ENCODE measurements at regions of chr12 and their contacts with region 1.

Region 1: GRCh38 chr12:546921-547845 is 87.4 kb downstream of the B4GALNT3 start:
- DNase-seq: peak; percentile 74 to 78
- ATAC-seq: peak; percentile 77 to 91
- H3K4me3 ChIP-seq: peak overlapping the region; percentile 9; the same call in 1 of the 3 replicates
- H3K27ac ChIP-seq: peak overlapping the region in 1 of 2 experiments; percentile 44; a peak in 1 of 6 replicates
- H3K4me1 ChIP-seq: peaks cover 13% of the 10 kb centered on the region; the same call in 2 of the 3 replicates
- CTCF ChIP-seq: peak; percentile 94
- EP300 ChIP-seq: no peak
- POLR2A ChIP-seq: no peak
- RAD21 ChIP-seq: peak; percentile 97 to 99

Region 2: GRCh38 chr12:401235-402028 is 145.8 kb before region 1 on chr12 and contains the start of gene CCDC77:
- CTCF ChIA-PET with region 1: interaction called, 14 read pairs
- POLR2A ChIA-PET with region 1: no interaction called
- DNase-seq: peak; percentile 78 to 95
- ATAC-seq: peak; percentile 97 to 99
- H3K4me3 ChIP-seq: peak within 1 kb of the TSS; percentile 72
- H3K27ac ChIP-seq: peak within 1 kb of the TSS; percentile 60 to 78
- H3K4me1 ChIP-seq: peaks cover 17% of the 10 kb centered on the region
- CTCF ChIP-seq: no peak; the same call in 1 of the 3 replicates
- EP300 ChIP-seq: no peak
- POLR2A ChIP-seq: no peak
- RAD21 ChIP-seq: no peak
- polyA plus RNA-seq, gene CCDC77: 15.6 and 23.1 TPM in 2 replicates

Region 3: GRCh38 chr12:452667-453210 is 94.4 kb before region 1 on chr12:
- CTCF ChIA-PET with region 1: interaction called, 252 read pairs
- POLR2A ChIA-PET with region 1: no interaction called
- DNase-seq: no peak
- ATAC-seq: 0 out of 6 replicates have a peak, but pooled peaks of 1 of the 2 experiments have one; percentile 33
- H3K4me3 ChIP-seq: no peak overlapping the region
- H3K27ac ChIP-seq: no peak overlapping the region
- H3K4me1 ChIP-seq: no peaks in the 10 kb centered on the region
- CTCF ChIP-seq: no peak
- EP300 ChIP-seq: no peak
- POLR2A ChIP-seq: no peak
- RAD21 ChIP-seq: no peak; a peak in 2 of 5 replicates

Region 4: GRCh38 chr12:480831-481816 is 66.1 kb before region 1 on chr12:
- CTCF ChIA-PET with region 1: interaction called, 46 read pairs
- POLR2A ChIA-PET with region 1: no interaction called
- DNase-seq: no peak
- ATAC-seq: no peak; a peak in 2 of 6 replicates
- H3K4me3 ChIP-seq: no peak overlapping the region
- H3K27ac ChIP-seq: no peak overlapping the region
- H3K4me1 ChIP-seq: no peaks in the 10 kb centered on the region
- CTCF ChIP-seq: no peak
- EP300 ChIP-seq: no peak
- POLR2A ChIP-seq: no peak
- RAD21 ChIP-seq: no peak

Region 5: DNA sequence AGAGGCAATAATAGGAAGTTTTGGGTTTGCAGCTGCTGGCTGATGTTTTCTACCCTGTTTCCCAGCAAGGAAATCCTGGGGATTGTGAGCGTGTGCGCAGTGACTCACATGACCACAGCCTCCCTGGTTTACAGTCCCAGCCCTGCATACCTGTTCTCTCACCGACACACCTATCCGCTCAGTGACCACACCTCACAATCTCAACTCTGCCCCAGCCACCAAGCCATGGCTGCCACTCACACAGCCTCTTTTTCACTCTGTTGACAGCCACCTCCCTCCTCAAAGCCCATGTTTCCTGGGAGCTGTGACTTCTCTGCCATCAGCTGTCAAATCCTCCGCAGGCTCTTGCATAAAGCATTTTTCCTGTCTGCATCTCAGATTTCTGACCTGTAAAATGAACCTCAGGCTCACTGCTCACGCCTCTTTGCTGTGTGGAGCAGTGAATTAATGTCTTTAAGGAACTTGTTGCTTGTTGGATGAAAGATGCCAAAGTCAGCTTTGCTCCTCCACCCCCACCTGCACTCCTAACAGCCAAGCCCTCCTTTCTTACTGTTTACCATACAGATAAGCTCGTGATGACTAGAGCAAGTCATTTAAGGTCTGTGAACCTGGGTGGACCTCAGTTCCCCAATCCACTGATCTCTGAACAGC is 43.9 kb before region 1 on chr12:
- CTCF ChIA-PET with region 1: interaction called, 13 read pairs
- POLR2A ChIA-PET with region 1: no interaction called
- DNase-seq: no peak
- ATAC-seq: peak in 1 of 2 experiments; percentile 33; a peak in 3 of 6 replicates
- H3K4me3 ChIP-seq: no peak overlapping the region
- H3K27ac ChIP-seq: no peak overlapping the region
- H3K4me1 ChIP-seq: no peaks in the 10 kb centered on the region
- CTCF ChIP-seq: no peak
- EP300 ChIP-seq: no peak
- POLR2A ChIP-seq: no peak
- RAD21 ChIP-seq: no peak

Region 6: DNA sequence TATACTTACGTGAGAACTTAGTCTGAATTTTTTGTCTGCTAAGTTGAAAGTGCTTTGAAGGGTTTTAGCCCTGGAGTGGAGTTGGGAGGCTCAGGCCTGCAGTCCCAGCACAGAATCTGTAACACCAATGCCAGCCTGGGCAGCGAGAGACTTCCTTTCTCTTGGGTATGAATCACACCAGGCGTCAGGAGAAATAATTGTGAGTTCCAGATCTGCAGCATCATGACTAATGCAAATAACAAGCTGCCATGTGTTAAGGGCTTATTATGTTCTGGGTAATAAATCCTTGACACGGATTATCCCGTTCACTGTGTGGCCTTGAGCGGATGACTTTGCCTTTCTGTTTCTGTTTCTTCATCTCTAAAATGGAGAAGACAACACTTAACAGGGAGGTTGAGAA is 16.9 kb before region 1 on chr12:
- CTCF ChIA-PET with region 1: interaction called, 75 read pairs
- POLR2A ChIA-PET with region 1: no interaction called
- DNase-seq: no peak
- ATAC-seq: no peak
- H3K4me3 ChIP-seq: no peak overlapping the region
- H3K27ac ChIP-seq: no peak overlapping the region
- H3K4me1 ChIP-seq: no peaks in the 10 kb centered on the region
- CTCF ChIP-seq: no peak
- EP300 ChIP-seq: no peak
- POLR2A ChIP-seq: no peak
- RAD21 ChIP-seq: no peak

Measured in A549 (cell line).